ENCODE measurements at regions of chr20 and their contacts with region 1.

Region 1: GRCh38 chr20:35664544-35665221 is at the starts of genes CPNE1 and RBM12:
- DNase-seq: peak; percentile 97
- H3K4me3 ChIP-seq: peak within 1 kb of the TSS; percentile 67 to 95 (median 70)
- H3K27ac ChIP-seq: peak within 1 kb of the TSS; percentile 94 to 99 (median 95)
- H3K4me1 ChIP-seq: peaks cover 0 to 43% (median 33%) of the 10 kb centered on the region in 4 donors
- H3K27me3 ChIP-seq: no peaks in the 10 kb centered on the region
- CTCF ChIP-seq: no peak
- EP300 ChIP-seq: peak in 1 of 4 donors; percentile 43
- POLR2A ChIP-seq: peak; percentile 93
- total RNA-seq, gene CPNE1: 56.5 to 156 (median 90.1) TPM
- total RNA-seq, gene RBM12: 24.6 to 26.4 (median 25.7) TPM

Region 2: DNA sequence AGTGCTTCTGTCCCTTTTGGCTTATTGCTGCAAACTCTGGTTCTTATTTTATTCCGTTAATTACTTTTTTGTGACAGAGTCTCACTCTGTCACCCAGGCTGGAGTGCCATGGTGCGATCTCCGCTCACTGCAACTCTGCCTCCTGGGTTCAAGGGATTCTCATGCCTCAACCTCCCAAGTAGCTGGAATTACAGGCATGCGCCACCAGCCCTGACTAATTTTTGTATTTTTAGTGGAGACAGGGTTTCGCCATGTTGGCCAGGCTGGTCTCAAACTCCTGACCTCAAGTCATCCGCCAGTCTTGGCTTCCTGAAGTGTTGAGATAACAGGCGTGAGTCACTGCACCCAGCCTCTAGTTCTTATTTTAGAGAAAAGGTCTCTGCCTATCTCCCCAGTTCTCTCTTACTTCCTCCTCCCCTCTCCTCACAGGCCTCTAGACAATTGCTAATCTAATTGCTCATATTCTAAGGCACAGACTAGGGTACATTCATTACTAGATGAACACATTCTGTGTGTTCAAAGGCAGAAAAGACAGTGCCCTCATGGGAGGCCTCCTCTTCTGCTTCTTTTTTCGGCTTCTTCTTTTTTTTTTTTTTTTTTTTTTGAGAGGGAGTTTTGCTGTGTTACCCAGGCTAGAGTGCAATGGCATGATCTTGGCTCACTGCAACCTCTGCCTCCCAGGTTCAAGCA is 544.5 kb before region 1 on chr20:
- intact Hi-C with region 1: no loop called
- DNase-seq: no peak
- H3K4me3 ChIP-seq: no peak overlapping the region
- H3K27ac ChIP-seq: no peak overlapping the region
- H3K4me1 ChIP-seq: no peaks in the 10 kb centered on the region
- H3K27me3 ChIP-seq: no peaks in the 10 kb centered on the region
- CTCF ChIP-seq: no peak
- EP300 ChIP-seq: no peak
- POLR2A ChIP-seq: no peak

Region 3: GRCh38 chr20:35248641-35249475 is 415.8 kb before region 1 on chr20:
- intact Hi-C with region 1: no loop called
- DNase-seq: no peak
- H3K4me3 ChIP-seq: no peak overlapping the region
- H3K27ac ChIP-seq: no peak overlapping the region
- H3K4me1 ChIP-seq: no peaks in the 10 kb centered on the region
- H3K27me3 ChIP-seq: no peaks in the 10 kb centered on the region
- CTCF ChIP-seq: no peak
- EP300 ChIP-seq: no peak
- POLR2A ChIP-seq: no peak

Region 4: GRCh38 chr20:35541783-35542588 is 122.7 kb before region 1 on chr20 and contains the start of gene ERGIC3:
- intact Hi-C with region 1: loop called (anchors 10 kb)
- DNase-seq: peak; percentile 98
- H3K4me3 ChIP-seq: peak within 1 kb of the TSS; percentile 68 to 88 (median 80)
- H3K27ac ChIP-seq: peak within 1 kb of the TSS; percentile 67 to 77 (median 72)
- H3K4me1 ChIP-seq: peaks cover 0 to 15% (median 14%) of the 10 kb centered on the region in 4 donors
- H3K27me3 ChIP-seq: no peaks in the 10 kb centered on the region
- CTCF ChIP-seq: no peak
- EP300 ChIP-seq: no peak
- POLR2A ChIP-seq: peak in 1 of 2 donors; percentile 20
- total RNA-seq, gene ERGIC3: 141 to 230 (median 195) TPM

Region 5: GRCh38 chr20:35601008-35601973 is 63.4 kb before region 1 on chr20:
- intact Hi-C with region 1: loop called (anchors 1 kb)
- DNase-seq: peak; percentile 91
- H3K4me3 ChIP-seq: peak overlapping the region; percentile 26 to 59 (median 50)
- H3K27ac ChIP-seq: peak overlapping the region in 2 of 4 donors; percentile 47 to 62
- H3K4me1 ChIP-seq: peaks cover 0 to 19% (median 19%) of the 10 kb centered on the region in 4 donors
- H3K27me3 ChIP-seq: peaks cover 0 to 29% (median 5%) of the 10 kb centered on the region in 3 donors
- CTCF ChIP-seq: peak; percentile 15 to 33 (median 26)
- EP300 ChIP-seq: no peak
- POLR2A ChIP-seq: no peak

Region 6: GRCh38 chr20:35619196-35620095 is 45.2 kb before region 1 on chr20:
- intact Hi-C with region 1: loop called (anchors 1 kb)
- DNase-seq: peak; percentile 92
- H3K4me3 ChIP-seq: peak overlapping the region; percentile 34 to 56 (median 43)
- H3K27ac ChIP-seq: peak overlapping the region; percentile 53 to 99 (median 88)
- H3K4me1 ChIP-seq: peaks cover 0 to 43% (median 33%) of the 10 kb centered on the region in 4 donors
- H3K27me3 ChIP-seq: no peaks in the 10 kb centered on the region
- CTCF ChIP-seq: peak in 2 of 4 experiments; percentile 6 to 10
- EP300 ChIP-seq: no peak
- POLR2A ChIP-seq: no peak